IMR-90 (cell line): ENCODE measurements at regions of chr1 and their contacts with region 1.

Region 1: DNA sequence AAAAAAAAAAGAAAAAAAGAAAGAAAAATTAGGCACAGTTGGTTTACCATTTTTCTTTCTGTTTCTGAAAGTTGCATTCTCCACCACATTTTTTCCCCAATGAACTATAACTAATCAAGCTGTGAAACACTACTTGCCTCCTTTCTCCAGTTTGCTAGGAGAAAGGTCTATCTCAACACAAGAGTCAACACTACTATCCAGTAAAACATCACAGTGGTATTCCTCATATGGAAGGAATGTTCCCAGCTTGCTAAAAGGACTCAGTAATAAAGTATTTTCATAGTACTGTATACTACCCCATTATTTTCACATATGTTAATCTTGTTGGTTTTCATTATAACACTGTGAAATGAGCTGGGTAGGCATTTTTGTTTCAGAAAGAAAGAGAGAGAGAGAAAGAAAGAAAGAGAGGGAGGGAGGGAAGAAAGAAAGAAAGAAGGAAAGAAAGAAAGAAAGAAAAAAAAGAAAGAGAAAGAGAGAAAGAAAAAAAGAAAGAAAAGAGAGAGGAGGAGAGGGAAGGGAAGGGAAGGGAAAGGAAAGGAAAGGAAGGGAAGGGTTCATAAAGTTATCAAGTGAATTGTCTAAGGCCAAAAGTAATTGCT is 7.9 kb downstream of the PTGER3 start:
- DNase-seq: no peak
- ATAC-seq: no peak
- H3K4me3 ChIP-seq: no peak overlapping the region
- H3K27ac ChIP-seq: no peak overlapping the region
- H3K4me1 ChIP-seq: no peaks in the 10 kb centered on the region
- H3K27me3 ChIP-seq: peaks cover 2% of the 10 kb centered on the region
- CTCF ChIP-seq: no peak
- POLR2A ChIP-seq: no peak
- RAD21 ChIP-seq: no peak

Region 2: GRCh38 chr1:70866542-70867264 is 173.1 kb before region 1 on chr1:
- CTCF ChIA-PET with region 1: no interaction called
- POLR2A ChIA-PET with region 1: interaction called, 15 read pairs
- dilution Hi-C with region 1: no loop called
- in situ Hi-C with region 1: no loop called
- intact Hi-C with region 1: no loop called
- DNase-seq: no peak
- ATAC-seq: no peak
- H3K4me3 ChIP-seq: no peak overlapping the region
- H3K27ac ChIP-seq: no peak overlapping the region
- H3K4me1 ChIP-seq: no peaks in the 10 kb centered on the region
- H3K27me3 ChIP-seq: no peaks in the 10 kb centered on the region
- CTCF ChIP-seq: no peak
- POLR2A ChIP-seq: no peak
- RAD21 ChIP-seq: no peak

Region 3: GRCh38 chr1:70990469-70991253 is 49.1 kb before region 1 on chr1:
- CTCF ChIA-PET with region 1: no interaction called
- POLR2A ChIA-PET with region 1: no interaction called
- dilution Hi-C with region 1: no loop called
- in situ Hi-C with region 1: no loop called
- intact Hi-C with region 1: no loop called
- DNase-seq: no peak
- ATAC-seq: no peak
- H3K4me3 ChIP-seq: no peak overlapping the region
- H3K27ac ChIP-seq: no peak overlapping the region
- H3K4me1 ChIP-seq: no peaks in the 10 kb centered on the region
- H3K27me3 ChIP-seq: no peaks in the 10 kb centered on the region
- CTCF ChIP-seq: no peak
- POLR2A ChIP-seq: no peak
- RAD21 ChIP-seq: no peak

Region 4: DNA sequence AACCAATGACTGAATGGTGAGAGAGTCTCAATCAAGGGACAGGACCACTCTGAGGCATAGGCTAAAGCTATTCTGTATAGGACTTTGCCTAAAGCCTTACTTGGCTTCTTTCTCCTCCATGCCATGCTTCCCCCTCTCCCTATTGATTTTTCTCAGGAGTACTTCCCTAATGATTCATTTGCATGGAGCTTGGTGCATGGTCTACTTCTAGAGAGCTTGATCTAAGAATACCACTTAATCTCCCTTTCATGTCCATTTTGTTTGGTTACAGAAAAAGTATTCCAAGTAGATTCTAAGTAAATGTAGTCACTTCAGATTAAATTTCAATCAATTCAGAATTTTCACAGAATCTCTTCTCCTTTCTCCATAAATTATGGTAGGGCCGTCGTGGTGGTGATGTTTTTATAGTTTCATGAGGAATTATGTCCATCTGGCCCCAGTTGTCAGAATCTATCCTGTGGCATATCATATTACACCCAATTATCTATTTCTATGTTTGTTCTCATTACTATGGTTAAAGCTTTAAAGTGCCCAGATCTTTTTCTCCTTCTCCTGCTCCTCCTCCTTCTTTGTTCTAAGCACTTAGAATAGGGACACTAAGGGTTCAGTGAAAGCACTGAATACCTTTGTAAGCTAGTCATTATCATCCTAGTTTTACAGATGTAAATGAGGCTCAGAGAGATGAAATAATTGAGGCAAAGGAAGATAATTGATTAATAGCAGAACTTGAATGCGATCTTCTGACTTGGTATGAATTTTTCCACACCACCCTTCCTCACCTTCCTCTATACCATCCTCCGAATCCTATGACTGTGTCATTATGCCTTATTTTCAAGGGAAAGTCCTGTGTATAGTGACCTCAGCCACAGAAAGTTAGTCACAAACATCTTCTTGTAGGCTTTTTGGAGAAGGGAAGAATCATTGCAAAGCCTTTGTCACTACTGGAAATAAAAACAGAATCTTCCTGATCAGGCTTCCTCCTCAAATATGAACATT is 126.7 kb after region 1 on chr1:
- CTCF ChIA-PET with region 1: no interaction called
- POLR2A ChIA-PET with region 1: no interaction called
- dilution Hi-C with region 1: no loop called
- in situ Hi-C with region 1: no loop called
- intact Hi-C with region 1: no loop called
- DNase-seq: no peak
- ATAC-seq: no peak
- H3K4me3 ChIP-seq: no peak overlapping the region
- H3K27ac ChIP-seq: no peak overlapping the region
- H3K4me1 ChIP-seq: no peaks in the 10 kb centered on the region
- H3K27me3 ChIP-seq: no peaks in the 10 kb centered on the region
- CTCF ChIP-seq: no peak
- POLR2A ChIP-seq: no peak
- RAD21 ChIP-seq: no peak